MCF 10A (cell line): ENCODE measurements at regions of chr19 and their contacts with region 1.

Region 1: GRCh38 chr19:43446746-43447489 is 18.5 kb downstream of the LYPD3 start:
- DNase-seq: peak; percentile 87
- H3K4me3 Mint-ChIP-seq: no peak overlapping the region
- H3K27ac Mint-ChIP-seq: no peak overlapping the region
- H3K4me1 Mint-ChIP-seq: peaks cover 11% of the 10 kb centered on the region
- H3K27me3 Mint-ChIP-seq: no peaks in the 10 kb centered on the region
- CTCF ChIP-seq: peak; percentile 91

Region 2: DNA sequence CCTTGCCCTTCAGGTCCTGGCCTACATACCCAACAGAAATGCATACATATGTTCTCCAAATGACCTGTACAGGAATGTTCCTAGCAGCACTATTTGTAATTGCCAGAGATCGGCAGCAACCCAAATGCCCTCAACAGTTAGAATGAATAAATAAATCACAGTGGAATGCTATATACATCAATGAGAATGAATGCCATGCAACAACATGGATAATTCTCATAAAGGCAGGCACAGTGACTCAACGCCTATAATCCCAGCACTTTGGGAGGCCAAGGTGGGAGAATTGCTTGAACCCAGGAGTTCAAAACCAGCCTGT is 13.6 kb before region 1 on chr19:
- CTCF ChIA-PET with region 1: interaction called, 15 read pairs
- POLR2A ChIA-PET with region 1: no interaction called
- intact Hi-C with region 1: no loop called
- DNase-seq: no peak
- H3K4me3 Mint-ChIP-seq: no peak overlapping the region
- H3K27ac Mint-ChIP-seq: no peak overlapping the region
- H3K4me1 Mint-ChIP-seq: peaks cover 2% of the 10 kb centered on the region
- H3K27me3 Mint-ChIP-seq: no peaks in the 10 kb centered on the region
- CTCF ChIP-seq: no peak

Region 3: GRCh38 chr19:43463381-43464136 is 16.6 kb after region 1 on chr19:
- CTCF ChIA-PET with region 1: interaction called, 39 read pairs
- POLR2A ChIA-PET with region 1: interaction called, 6 read pairs
- intact Hi-C with region 1: no loop called
- DNase-seq: peak; percentile 97
- H3K4me3 Mint-ChIP-seq: peak overlapping the region; percentile 88
- H3K27ac Mint-ChIP-seq: peak overlapping the region; percentile 80
- H3K4me1 Mint-ChIP-seq: peaks cover 45% of the 10 kb centered on the region
- H3K27me3 Mint-ChIP-seq: no peaks in the 10 kb centered on the region
- CTCF ChIP-seq: no peak

Region 4: DNA sequence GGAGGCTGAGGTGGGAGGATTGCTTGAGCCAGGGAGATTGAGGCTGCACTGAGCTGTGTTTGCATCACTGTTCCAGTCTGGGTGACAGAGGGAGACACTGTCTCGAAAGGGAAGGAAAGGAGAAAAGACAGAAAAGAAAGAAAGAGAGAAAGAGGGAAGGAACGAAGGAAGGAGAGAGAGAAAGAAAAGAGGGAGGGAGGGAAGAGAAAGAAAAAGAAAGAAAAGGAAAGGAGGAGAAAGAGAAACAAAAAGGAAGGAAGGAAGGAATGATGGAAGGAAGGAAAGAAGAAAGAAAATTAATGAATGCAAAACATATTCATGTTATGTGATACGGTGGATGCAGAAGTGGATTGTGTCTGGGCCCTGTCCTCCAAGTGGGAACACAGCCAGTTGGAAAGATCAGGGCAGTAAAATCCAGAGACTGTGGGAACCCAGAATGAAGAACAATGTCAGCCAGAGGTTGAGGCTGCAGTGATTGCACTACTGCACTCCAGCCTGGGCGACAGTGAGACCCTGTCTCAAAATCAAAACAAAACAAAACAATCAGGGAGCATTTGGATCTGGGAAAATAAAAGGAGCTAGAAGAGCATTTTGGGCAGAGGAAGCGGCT is 51.4 kb after region 1 on chr19:
- CTCF ChIA-PET with region 1: interaction called, 20 read pairs
- POLR2A ChIA-PET with region 1: interaction called, 4 read pairs
- intact Hi-C with region 1: no loop called
- DNase-seq: no peak
- H3K4me3 Mint-ChIP-seq: no peak overlapping the region
- H3K27ac Mint-ChIP-seq: no peak overlapping the region
- H3K4me1 Mint-ChIP-seq: peaks cover 6% of the 10 kb centered on the region
- H3K27me3 Mint-ChIP-seq: no peaks in the 10 kb centered on the region
- CTCF ChIP-seq: no peak

Region 5: DNA sequence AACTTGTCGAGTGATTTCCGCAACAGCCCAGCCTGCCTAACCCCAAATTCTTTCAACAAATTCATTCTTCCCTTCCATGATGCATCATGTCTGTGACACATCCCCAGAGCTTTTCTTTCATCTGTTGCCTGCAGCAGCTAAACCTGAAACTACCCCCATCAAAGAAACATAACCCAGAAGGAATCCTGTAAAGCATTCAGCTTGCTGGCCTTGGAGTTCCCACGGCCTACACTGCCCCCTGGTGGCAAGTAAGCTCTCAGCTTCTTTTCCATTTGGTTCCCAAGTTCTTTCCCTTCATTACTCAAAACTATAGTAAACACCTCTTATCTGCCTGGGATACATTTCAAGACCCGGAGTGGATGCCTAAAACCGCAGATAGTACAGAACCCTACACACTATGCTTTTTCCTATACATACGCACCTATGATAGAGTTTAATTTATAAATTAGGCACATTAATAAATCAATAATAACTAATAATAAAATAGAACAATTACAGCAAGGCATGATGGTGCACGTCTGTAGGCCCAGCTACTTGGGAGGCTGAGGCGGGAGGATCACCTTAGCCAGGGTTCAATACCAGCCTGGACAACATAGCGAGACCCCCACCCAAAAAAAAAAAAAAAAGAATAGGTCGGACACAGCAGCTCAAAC is 72.6 kb after region 1 on chr19:
- CTCF ChIA-PET with region 1: interaction called, 261 read pairs
- POLR2A ChIA-PET with region 1: interaction called, 39 read pairs
- intact Hi-C with region 1: loop called (anchors 1 kb)
- DNase-seq: peak; percentile 92
- H3K4me3 Mint-ChIP-seq: peak overlapping the region; percentile 19
- H3K27ac Mint-ChIP-seq: no peak overlapping the region
- H3K4me1 Mint-ChIP-seq: peaks cover 16% of the 10 kb centered on the region
- H3K27me3 Mint-ChIP-seq: no peaks in the 10 kb centered on the region
- CTCF ChIP-seq: peak; percentile 84

Region 6: DNA sequence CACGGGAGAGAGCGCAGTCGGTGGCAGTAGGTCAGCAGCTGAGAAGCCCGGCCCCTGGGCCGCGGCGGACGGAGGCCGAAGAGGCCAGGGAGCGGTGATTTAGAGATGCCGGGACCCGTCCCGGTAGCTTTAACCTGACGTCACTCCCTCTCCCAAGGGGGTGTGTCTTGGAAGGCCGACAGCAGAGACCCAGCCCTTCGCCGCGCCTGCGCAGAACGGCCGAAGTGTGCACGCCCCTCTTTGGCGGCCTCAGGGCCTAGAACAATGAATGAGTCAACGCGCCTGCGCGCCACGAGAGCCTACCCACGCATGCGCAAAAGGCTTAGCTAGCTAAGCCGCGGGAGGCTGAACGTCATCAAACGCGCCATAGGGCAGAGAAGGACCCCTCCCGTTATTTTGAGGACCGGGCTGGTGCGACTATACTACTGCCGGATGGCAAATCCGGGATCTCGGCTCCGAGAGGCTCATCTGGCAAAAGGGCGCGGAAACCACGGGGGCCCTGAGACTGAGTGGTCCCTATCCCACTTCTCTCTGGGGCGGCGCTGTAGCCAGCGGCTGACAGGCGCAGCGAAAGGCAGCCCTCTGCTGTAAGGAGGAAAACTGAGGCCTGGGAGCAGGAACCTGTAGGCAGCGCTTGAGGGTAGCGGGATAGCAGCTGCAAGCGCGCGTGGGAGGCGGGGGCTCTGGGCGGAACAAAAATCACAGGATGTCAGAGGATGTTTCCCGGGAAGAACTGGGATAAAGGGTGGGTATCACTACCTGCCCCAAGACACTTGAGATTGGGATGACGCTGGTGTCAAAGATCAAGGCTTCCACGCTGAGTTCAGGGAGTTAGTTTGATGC is 149.3 kb after region 1 on chr19 and contains the starts of genes IRGQ and ZNF576:
- CTCF ChIA-PET with region 1: interaction called, 10 read pairs
- POLR2A ChIA-PET with region 1: interaction called, 3 read pairs
- intact Hi-C with region 1: loop called (anchors 2 kb)
- DNase-seq: peak; percentile 100
- H3K4me3 Mint-ChIP-seq: peak within 1 kb of the TSS; percentile 99
- H3K27ac Mint-ChIP-seq: peak within 1 kb of the TSS; percentile 99
- H3K4me1 Mint-ChIP-seq: peaks cover 24% of the 10 kb centered on the region
- H3K27me3 Mint-ChIP-seq: no peaks in the 10 kb centered on the region
- CTCF ChIP-seq: no peak
- total RNA-seq, gene IRGQ: 21.0 and 26.5 TPM in 2 replicates
- total RNA-seq, gene ZNF576: 13.2 and 18.4 TPM in 2 replicates

Region 7: GRCh38 chr19:43809762-43810696 is 363.1 kb after region 1 on chr19:
- CTCF ChIA-PET with region 1: no interaction called
- POLR2A ChIA-PET with region 1: interaction called, 3 read pairs
- intact Hi-C with region 1: loop called (anchors 10 kb)
- DNase-seq: peak; percentile 74
- H3K4me3 Mint-ChIP-seq: no peak overlapping the region
- H3K27ac Mint-ChIP-seq: no peak overlapping the region
- H3K4me1 Mint-ChIP-seq: peaks cover 6% of the 10 kb centered on the region
- H3K27me3 Mint-ChIP-seq: peaks cover 11% of the 10 kb centered on the region
- CTCF ChIP-seq: peak; percentile 60